Dorsolateral prefrontal cortex (tissue), 120 donors: ENCODE measurements at regions of chr12 and their contacts with region 1.

Region 1: DNA sequence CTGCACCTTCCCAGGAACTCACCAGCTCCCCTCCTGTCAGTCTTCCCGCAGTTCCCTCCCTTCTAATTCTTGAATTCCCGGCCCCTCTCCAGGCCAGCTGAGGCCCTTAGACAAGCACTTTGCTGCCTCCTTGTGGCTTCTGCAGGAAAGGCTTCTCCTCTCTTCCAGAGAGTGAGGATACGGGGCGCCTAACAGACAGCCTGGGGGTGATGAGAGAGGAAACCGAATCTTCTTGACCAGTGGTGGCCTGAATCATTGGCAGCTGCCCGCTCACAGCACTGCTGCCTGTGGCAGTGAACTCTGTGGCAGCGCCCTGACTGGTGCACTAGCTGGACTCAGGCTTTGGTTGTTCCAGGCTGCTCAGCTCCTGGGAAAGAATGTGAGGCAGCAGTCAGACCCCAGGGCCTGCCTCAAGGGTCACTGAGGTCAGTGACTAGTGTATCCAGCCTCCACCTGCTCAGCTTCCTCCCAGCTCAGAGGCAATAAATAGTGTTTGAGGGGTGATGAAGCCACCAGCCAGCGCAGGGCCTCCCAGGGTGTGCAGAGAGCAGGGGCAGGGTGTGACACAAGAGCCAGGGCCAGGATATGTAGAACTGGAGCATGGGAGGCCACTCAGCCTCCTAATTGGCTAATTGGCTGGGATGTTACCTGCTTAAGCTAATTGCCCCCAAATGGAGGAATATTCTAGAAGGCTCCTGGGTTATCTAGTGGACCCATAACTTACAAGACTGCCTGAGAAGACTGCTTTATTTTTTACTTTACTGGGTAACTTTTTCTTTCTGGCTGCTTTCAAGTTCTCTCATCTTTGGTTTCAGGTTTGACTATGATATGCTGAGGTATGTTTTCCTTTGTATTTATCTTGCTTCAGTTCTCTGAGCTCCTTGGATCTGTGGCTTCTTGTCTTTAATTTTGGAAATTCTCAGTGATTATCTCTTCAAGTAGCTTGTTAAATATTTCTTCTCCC is 12.9 kb upstream of the MCRS1 start:
- DNase-seq: peak; percentile 44 to 90 (median 78)
- H3K4me3 ChIP-seq: no peak overlapping the region
- H3K27ac ChIP-seq: peak overlapping the region in 12 of 59 donors; percentile 6 to 61 (median 34)
- H3K27me3 ChIP-seq: no peaks in the 10 kb centered on the region
- CTCF ChIP-seq: peak; percentile 43 to 94 (median 80)

Region 2: DNA sequence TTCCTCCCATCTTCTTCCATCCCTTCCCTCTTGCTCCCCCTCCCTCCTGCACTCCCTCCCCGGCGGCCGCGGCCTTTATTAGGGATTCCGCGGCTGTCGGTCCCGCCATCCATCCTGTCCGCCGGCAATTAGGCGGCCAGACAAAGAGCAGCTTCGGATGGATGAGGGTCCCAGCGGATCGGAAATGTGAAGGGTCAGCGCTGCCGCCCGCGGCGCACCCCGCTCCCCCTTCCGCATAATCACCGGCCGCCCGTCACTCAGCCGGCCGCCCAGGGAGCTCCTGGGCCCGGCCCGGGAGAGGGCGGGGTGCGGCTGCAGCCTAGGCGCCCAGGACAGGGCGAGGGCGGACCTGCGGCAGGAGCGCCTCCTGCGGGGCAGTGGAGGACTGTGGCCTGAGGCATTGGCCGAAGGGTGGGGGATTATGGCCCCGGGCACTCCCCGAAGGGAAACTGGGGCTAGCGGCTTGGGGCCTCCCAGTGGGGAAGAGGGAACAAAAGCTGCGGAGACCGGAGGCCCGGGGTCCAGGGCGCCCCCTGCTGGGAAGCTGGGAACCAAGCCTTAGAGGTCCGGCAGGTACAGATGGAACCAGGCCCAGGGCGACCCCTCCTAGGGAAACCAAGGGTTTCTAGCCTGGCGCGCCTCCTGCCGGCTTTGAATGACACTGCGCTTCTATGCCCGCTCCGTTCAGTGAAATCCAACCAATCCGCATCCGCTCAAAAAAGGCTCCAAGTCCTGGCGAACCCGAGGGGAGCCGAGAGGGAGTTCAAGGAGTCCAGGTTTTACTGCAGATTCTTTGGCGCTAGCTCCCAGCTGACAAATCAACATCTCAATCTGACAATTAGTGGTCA is 238.6 kb before region 1 on chr12:
- intact Hi-C with region 1: loop called in 1 of 2 experiments (anchors 10 kb)
- DNase-seq: peak; percentile 59 to 76 (median 66)
- H3K4me3 ChIP-seq: peak overlapping the region; percentile 29 to 73 (median 57)
- H3K27ac ChIP-seq: peak overlapping the region in 8 of 59 donors; percentile 19 to 80 (median 29)
- H3K27me3 ChIP-seq: peaks cover 0 to 83% (median 34%) of the 10 kb centered on the region in 45 donors
- CTCF ChIP-seq: peak; percentile 55 to 90 (median 79)

Region 3: GRCh38 chr12:49428793-49429192 is 152.1 kb before region 1 on chr12:
- intact Hi-C with region 1: no loop called
- DNase-seq: peak in 2 of 10 donors; percentile 36 to 42
- H3K4me3 ChIP-seq: peak overlapping the region in 1 of 59 donors; percentile 14
- H3K27ac ChIP-seq: peak overlapping the region in 17 of 59 donors; percentile 4 to 78 (median 38)
- H3K27me3 ChIP-seq: no peaks in the 10 kb centered on the region
- CTCF ChIP-seq: no peak